MCF 10A (cell line): ENCODE measurements at regions of chr3 and their contacts with region 1.

Region 1: DNA sequence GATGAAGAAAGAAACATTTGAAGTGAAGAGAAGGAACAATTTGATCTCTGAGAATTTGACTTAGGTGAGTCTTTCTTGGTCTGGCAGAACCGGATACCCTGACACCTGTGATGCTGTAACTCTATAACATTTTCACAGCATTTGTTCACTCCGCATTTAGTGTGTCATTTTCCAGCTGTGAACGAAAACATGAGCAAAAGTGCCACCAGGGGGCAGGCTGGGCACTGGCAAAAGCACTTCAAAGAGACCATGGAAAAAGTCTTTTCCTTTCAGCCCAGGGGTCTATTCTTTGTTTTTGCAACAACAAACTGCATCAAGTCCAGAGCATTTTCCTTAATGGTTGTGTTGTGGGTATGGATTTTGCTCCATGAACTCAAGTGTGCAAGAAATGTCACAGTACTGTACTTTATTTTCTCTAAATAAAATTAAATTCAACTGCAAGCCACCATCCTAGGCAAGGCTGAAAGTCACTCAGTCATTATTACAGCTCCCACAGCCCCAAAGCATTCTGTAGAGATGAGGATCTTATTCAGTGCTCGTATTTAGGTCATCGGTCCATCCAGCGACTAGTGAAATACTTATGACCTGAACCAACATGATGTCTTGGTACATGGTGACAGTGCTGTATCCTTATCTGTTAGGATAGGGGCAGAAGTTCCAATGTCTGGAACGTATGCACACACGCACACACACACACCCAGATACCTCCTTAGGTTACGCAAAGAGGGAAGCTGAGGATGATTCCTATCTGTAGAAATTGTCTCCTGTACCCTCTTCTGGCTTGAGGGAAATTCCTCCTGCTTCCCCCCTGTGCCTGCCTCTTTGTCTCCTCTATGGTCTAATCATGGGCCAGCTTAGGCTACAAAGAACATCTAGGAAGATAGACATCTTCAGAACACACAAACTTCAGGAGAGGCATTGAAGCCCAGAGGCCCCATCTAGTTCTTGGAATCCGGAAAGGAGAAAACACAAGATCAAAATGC is 125.5 kb downstream of the GADL1 start:
- DNase-seq: peak; percentile 67
- H3K4me3 Mint-ChIP-seq: no peak overlapping the region
- H3K27ac Mint-ChIP-seq: no peak overlapping the region
- H3K4me1 Mint-ChIP-seq: peaks cover 12% of the 10 kb centered on the region
- H3K27me3 Mint-ChIP-seq: no peaks in the 10 kb centered on the region
- CTCF ChIP-seq: peak; percentile 80

Region 2: GRCh38 chr3:30042274-30042859 is 726.6 kb before region 1 on chr3:
- CTCF ChIA-PET with region 1: interaction called, 14 read pairs
- POLR2A ChIA-PET with region 1: no interaction called
- intact Hi-C with region 1: no loop called
- DNase-seq: peak; percentile 80
- H3K4me3 Mint-ChIP-seq: no peak overlapping the region
- H3K27ac Mint-ChIP-seq: no peak overlapping the region
- H3K4me1 Mint-ChIP-seq: no peaks in the 10 kb centered on the region
- H3K27me3 Mint-ChIP-seq: no peaks in the 10 kb centered on the region
- CTCF ChIP-seq: peak; percentile 86

Region 3: GRCh38 chr3:30538787-30539186 is 230.2 kb before region 1 on chr3:
- CTCF ChIA-PET with region 1: no interaction called
- POLR2A ChIA-PET with region 1: no interaction called
- intact Hi-C with region 1: no loop called
- DNase-seq: peak; percentile 75
- H3K4me3 Mint-ChIP-seq: no peak overlapping the region
- H3K27ac Mint-ChIP-seq: peak overlapping the region; percentile 37
- H3K4me1 Mint-ChIP-seq: no peaks in the 10 kb centered on the region
- H3K27me3 Mint-ChIP-seq: no peaks in the 10 kb centered on the region
- CTCF ChIP-seq: no peak

Region 4: GRCh38 chr3:30751610-30752299 is 17.2 kb before region 1 on chr3:
- CTCF ChIA-PET with region 1: interaction called, 35 read pairs
- POLR2A ChIA-PET with region 1: interaction called, 6 read pairs
- intact Hi-C with region 1: no loop called
- DNase-seq: peak; percentile 52
- H3K4me3 Mint-ChIP-seq: no peak overlapping the region
- H3K27ac Mint-ChIP-seq: no peak overlapping the region
- H3K4me1 Mint-ChIP-seq: peaks cover 6% of the 10 kb centered on the region
- H3K27me3 Mint-ChIP-seq: no peaks in the 10 kb centered on the region
- CTCF ChIP-seq: no peak

Region 5: DNA sequence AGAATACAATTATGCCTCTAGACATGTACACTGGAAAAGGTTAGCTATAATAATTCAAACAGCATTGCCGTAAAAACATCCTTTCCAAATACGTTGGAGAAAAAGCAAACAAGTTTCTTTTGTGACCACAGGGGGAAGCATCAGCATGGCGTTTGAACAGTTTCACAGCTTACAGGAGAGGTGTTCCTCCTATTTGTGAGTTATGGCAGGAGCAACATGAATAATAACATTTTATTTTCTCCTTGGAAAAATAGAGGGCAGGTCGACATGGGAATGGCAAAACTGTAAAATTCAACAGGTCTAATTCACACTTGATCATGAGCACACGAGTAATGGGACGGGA is 165.2 kb after region 1 on chr3:
- CTCF ChIA-PET with region 1: interaction called, 11 read pairs
- POLR2A ChIA-PET with region 1: interaction called, 3 read pairs
- intact Hi-C with region 1: no loop called
- DNase-seq: peak; percentile 12
- H3K4me3 Mint-ChIP-seq: no peak overlapping the region
- H3K27ac Mint-ChIP-seq: no peak overlapping the region
- H3K4me1 Mint-ChIP-seq: peaks cover 3% of the 10 kb centered on the region
- H3K27me3 Mint-ChIP-seq: no peaks in the 10 kb centered on the region
- CTCF ChIP-seq: peak; percentile 27

Region 6: GRCh38 chr3:30970183-30970582 is 201.2 kb after region 1 on chr3:
- CTCF ChIA-PET with region 1: interaction called, 8 read pairs
- POLR2A ChIA-PET with region 1: interaction called, 4 read pairs
- intact Hi-C with region 1: loop called (anchors 2 kb)
- DNase-seq: peak; percentile 60
- H3K4me3 Mint-ChIP-seq: no peak overlapping the region
- H3K27ac Mint-ChIP-seq: no peak overlapping the region
- H3K4me1 Mint-ChIP-seq: peaks cover 6% of the 10 kb centered on the region
- H3K27me3 Mint-ChIP-seq: no peaks in the 10 kb centered on the region
- CTCF ChIP-seq: peak; percentile 40

Region 7: DNA sequence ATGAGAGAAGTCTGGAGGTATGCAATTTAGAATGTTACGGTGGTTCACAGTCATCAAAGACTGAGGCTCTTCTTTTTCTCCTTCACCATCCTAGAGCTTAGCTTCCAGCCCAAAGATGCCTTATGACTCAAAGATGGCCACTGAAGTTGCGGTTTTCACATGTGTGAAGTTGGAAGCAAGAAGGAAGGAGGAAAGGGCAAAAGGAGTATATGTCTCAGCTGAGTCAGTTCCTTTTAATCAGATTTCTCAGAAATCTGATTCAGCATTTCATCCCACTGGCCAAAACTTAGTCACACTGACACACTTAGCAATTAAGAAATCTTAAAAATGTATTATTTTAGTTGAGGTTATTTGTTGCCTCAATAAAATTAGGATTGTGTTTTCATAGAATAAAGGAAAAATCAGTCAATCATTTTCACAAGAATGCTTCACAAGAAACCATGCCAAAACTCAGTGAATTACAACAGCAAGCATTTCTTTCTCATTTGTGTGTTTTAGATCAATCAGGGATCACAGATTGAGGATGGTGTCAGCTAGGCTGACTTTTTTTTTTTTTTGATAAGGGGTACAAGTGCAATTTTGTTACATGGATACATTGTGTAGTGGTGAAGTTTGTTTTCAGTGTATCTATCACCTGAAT is 336.6 kb after region 1 on chr3:
- CTCF ChIA-PET with region 1: interaction called, 10 read pairs
- POLR2A ChIA-PET with region 1: interaction called, 5 read pairs
- intact Hi-C with region 1: no loop called
- DNase-seq: peak; percentile 96
- H3K4me3 Mint-ChIP-seq: peak overlapping the region; percentile 54
- H3K27ac Mint-ChIP-seq: peak overlapping the region; percentile 72
- H3K4me1 Mint-ChIP-seq: peaks cover 52% of the 10 kb centered on the region
- H3K27me3 Mint-ChIP-seq: no peaks in the 10 kb centered on the region
- CTCF ChIP-seq: no peak

Region 8: DNA sequence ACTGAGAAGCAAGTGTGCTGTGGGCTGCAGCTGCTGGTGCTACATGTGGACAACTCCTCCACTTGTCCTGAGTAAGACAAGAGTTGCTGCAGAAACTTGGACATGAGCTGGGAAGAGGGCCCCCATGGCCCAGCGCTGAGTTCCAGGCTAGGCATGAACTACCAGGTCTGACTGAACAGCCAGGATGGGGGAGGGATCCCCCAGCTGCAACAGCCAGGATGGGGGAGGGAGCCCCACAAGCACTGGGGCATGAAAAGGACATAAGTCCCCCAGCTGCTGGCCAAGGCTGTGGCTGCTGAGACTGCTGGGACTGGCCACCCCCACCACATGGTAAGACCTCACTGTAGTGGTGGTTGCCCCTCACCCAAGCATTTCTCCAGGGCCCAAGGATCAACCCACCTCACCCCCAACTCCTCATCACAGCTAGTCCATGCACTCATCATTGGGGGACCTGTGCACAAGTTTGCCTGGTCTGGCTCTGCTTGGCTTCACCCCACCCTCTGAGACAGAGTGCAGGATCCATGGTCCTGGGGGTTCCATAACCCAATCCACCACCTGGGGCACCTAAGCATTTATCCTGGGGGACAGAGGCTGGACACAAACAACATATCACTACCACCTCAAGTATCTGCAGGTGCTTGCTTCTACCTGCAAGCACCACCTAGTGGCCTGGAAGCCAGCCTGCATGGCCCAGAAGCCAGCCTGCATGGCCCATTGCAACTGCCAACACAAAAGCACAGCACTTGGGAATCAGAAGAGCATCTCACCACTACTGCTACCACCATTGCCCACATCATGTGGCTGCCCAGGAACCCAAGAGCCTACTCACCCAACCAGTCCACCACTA is 679.3 kb after region 1 on chr3:
- CTCF ChIA-PET with region 1: no interaction called
- POLR2A ChIA-PET with region 1: no interaction called
- intact Hi-C with region 1: loop called (anchors 5 kb)
- DNase-seq: peak; percentile 47
- H3K4me3 Mint-ChIP-seq: no peak overlapping the region
- H3K27ac Mint-ChIP-seq: no peak overlapping the region
- H3K4me1 Mint-ChIP-seq: no peaks in the 10 kb centered on the region
- H3K27me3 Mint-ChIP-seq: peaks cover 2% of the 10 kb centered on the region
- CTCF ChIP-seq: peak; percentile 48